Activated T-helper 1 cell treated with anti-CD3 and anti-CD28 coated beads, Interleukin-12 subunit alpha, Interleukin-12 subunit beta, Interleukin-2, Interleukin-4 antibody, amounts not matched to agents 30 ng/mL and 10 ng/mL and 1 ng/mL, durations not matched to agents 14 hours and 24 hours and 36 hours (primary cell): ENCODE measurements at regions of chr3 and their contacts with region 1.

Region 1: DNA sequence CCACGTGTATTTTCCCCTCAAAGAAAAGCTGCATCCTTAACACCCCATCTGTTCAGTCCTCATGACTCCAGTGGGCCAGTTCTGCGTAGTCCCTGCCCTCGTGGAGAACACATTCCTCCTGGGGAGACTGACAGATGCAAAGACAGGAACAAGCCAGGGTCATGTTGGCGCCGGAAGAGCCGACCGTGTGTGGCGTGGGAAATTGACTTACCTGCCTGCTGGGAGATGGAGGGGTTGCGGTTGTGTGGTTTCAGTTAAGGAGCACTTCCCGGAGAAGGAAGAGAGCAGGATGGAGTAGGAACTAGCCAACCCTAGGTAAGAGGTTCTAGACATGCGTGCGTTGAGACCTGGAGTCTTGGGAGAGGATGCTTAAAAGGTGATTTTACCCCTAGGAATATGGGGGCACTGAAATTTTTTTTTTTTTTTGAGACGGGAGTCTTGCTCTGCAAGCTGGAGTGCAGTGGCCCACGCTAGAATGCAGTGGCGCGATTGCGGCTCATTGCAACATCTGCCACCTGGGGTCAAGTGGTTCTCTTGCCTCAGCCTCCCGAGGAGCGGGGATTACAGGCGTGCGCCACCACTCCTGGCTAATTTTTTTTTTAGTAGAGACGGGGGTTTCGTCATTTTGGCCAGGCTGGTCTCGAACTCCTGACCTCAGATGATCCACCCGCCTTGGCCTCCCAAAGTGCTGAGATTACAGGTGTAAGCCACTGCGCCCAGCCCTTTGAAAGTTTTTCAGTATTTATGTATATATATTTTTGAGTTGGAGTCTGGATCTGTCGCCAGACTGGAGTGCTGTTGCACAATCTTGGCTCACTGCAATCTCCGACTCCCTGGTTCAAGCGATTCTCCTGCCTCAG is 1.4 kb downstream of the VHL start:
- DNase-seq: no peak
- H3K4me3 Mint-ChIP-seq: peak overlapping the region; percentile 90
- H3K27ac Mint-ChIP-seq: peak overlapping the region; percentile 85
- H3K4me1 Mint-ChIP-seq: peaks cover 25% of the 10 kb centered on the region
- H3K27me3 Mint-ChIP-seq: no peaks in the 10 kb centered on the region

Region 2: DNA sequence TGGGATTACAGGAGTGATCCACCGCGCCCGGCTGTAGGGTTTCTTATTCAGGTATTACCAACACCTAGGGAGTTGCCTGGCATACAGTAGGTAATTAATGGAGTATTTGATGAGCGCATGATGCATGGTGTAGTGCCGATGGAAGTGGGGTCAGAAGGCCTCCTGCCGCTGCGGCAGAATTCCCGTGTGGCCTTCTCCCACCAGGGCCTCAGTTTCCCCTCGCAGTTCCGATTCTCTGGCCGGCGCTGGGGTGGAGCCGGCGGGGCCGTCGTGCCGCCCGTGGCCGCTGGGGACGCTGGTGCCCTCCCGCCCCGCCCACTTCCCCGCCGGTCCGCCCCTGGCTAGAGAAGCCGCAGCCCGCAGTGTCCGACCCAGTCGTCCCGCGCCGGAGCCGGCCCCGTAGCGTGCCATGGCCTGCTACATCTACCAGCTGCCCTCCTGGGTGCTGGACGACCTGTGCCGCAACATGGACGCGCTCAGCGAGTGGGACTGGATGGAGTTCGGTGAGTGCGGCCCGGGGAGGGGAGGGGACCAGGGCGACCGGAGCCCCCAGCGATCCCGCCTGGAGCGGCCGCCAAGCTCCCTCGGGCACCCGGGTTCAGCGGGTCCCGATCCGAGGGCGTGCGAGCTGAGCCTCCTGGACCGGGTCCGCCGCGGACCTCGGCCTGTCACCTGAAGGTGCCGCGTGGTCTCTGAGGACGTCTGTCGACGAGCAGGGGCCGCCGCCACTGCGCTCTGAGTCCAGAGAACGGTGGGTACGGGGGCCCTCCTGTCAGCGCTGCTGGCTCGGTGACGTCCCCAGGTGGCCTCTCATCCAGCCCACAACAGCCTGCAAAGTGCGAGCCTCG is 21.8 kb after region 1 on chr3 and contains the start of gene IRAK2:
- intact Hi-C with region 1: loop called (anchors 1 kb)
- DNase-seq: peak; percentile 51
- H3K4me3 Mint-ChIP-seq: peak within 1 kb of the TSS; percentile 82
- H3K27ac Mint-ChIP-seq: peak within 1 kb of the TSS; percentile 44
- H3K4me1 Mint-ChIP-seq: peaks cover 35% of the 10 kb centered on the region
- H3K27me3 Mint-ChIP-seq: no peaks in the 10 kb centered on the region
- total RNA-seq, gene IRAK2: 8.1 and 8.6 TPM in 2 replicates

Region 3: DNA sequence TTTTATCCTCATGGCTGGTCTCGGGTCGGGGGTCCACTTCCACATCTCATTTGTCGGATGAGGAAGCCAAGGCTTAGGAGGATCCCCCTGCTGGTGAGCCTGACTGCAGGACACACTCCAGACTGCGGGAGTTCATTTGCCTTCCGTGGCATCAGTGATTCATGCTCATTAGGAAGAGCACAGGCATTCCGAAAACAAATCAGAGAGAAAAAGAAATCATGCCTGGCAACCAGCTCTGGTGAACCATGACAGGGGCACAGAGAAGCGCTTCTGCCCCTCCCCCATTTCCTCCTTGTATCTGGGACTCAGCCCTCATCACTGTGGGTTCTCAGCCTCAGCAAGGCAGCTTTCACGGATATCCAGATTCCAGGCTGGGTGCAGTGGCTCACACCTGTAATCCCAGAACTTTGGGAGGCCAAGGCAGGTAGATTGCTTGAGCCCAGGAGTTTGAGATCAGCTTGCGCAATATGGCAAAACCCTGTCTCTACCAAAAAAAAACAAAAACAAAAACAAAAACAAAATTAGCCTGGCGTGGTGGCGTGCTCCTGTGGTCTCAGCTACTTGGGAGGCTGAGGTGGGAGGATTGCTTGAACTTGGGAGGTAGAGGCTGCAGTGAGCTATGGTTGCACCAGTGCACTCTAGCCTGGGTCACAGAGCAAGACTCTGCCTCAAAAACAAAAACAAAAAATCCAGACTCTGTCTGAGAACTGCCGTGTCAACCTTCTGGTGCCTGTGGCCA is 50.2 kb after region 1 on chr3:
- intact Hi-C with region 1: loop called (anchors 2 kb)
- DNase-seq: no peak
- H3K4me3 Mint-ChIP-seq: peak overlapping the region; percentile 63
- H3K27ac Mint-ChIP-seq: peak overlapping the region; percentile 82
- H3K4me1 Mint-ChIP-seq: peaks cover 75% of the 10 kb centered on the region
- H3K27me3 Mint-ChIP-seq: no peaks in the 10 kb centered on the region

Region 4: DNA sequence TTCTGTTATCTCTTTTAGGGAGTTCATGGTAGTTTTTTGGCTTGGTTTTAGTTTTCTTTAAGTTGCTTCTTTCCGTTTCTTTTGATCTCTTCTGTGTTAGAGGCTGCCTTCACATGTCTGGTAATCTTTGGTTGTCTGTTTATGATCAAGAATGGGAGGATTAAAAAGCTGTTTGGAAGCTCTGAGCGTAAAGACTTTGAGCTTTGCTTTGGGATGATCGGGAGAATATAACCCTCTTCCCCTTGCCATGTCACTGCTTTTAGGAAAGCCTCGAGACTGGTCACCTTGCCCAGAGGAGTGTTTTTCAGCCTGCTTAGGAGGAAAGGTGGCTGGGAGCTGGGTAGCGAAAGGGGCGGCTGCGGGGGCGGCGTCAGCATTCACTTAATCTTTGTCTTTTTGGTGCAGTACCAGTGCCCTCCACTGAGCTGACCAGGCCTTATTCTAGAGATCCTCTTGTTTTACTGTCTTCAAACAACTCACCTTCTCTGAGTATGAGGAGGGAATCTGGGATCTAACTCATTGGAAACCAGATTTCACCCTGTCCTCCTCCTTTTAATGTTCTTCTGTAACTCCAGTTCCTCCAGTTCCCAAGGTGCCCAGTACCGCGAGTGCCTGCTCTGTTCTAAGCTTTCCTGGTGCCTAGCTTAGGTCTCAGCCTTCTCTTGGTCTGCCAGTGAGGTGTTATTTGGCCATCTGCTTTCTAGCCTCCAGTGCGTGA is 120.9 kb after region 1 on chr3:
- intact Hi-C with region 1: loop called (anchors 5 kb)
- DNase-seq: peak; percentile 51
- H3K4me3 Mint-ChIP-seq: peak overlapping the region; percentile 79
- H3K27ac Mint-ChIP-seq: peak overlapping the region; percentile 80
- H3K4me1 Mint-ChIP-seq: peaks cover 74% of the 10 kb centered on the region
- H3K27me3 Mint-ChIP-seq: no peaks in the 10 kb centered on the region